CD14-positive monocyte (primary cell): ENCODE measurements at regions of chr20 and their contacts with region 1.

Region 1: DNA sequence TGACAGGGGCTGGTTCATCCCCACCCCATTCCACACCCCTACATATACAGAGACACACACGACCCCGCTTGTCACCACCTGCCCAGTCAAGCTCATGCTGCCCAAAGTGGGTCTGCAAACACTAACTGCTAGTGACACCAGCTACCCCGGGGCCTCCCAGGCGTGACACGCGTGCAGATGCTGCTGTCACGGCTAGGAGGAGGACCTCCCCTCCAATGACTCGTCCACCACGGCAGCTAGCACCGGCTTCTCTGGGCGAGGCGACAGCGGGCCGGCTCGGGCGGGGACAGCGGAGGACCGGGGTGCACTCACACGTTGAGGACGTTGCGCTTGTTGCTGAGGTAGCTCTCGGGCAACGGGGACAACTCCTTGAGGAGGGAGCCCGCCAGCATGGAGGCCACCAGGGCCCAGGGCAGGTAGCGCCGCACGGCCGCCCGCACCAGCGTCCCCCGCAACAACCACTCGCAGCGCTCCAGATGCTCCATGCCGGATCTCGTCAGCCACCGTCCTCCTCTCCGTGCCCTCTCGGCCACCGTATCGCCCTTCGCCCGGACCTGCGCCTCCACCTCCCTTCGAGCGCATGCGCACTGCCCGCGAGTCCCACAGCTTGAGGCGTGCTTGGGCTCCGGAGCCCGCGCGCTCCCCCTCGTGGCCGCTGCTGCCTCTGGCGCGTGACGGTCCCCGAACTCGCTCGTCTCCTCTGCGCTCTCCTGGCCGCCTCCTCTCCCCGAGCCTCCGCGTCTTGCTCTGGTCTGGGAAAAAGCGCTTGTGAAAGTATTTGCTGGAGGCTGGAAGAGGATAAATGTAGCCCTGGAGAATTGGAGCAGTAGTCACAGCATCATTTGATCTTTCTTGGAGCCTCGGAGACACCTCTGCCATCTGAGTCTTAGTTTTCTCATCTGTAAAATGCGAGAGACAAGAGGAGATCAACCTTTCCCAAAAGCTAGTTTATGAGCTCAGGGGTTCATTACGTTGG is at the start of gene FITM2:
- DNase-seq: peak; percentile 93 to 97 (median 97)
- H3K4me3 ChIP-seq: peak within 1 kb of the TSS; percentile 61 to 89 (median 82)
- H3K4me3 Mint-ChIP-seq: peak within 1 kb of the TSS; percentile 83 to 91
- H3K27ac ChIP-seq: peak within 1 kb of the TSS in 1 of 2 donors; percentile 73
- H3K27ac Mint-ChIP-seq: peak within 1 kb of the TSS; percentile 41 to 85 (median 74)
- H3K4me1 ChIP-seq: peaks cover 16 to 23% of the 10 kb centered on the region in 2 donors
- H3K4me1 Mint-ChIP-seq: peaks cover 16% of the 10 kb centered on the region
- H3K27me3 ChIP-seq: peaks cover 0 to 7% of the 10 kb centered on the region in 2 donors
- H3K27me3 Mint-ChIP-seq: peaks cover 8 to 14% (median 9%) of the 10 kb centered on the region in 3 donors
- CTCF ChIP-seq: peak; percentile 90
- polyA plus RNA-seq, gene FITM2: 0.32 to 2.2 (median 0.69) TPM

Region 2: GRCh38 chr20:43463864-43464785 is 846.8 kb before region 1 on chr20:
- intact Hi-C with region 1: loop called in 1 of 2 experiments (anchors 10 kb)
- DNase-seq: no peak
- H3K4me3 ChIP-seq: no peak overlapping the region
- H3K4me3 Mint-ChIP-seq: no peak overlapping the region
- H3K27ac ChIP-seq: no peak overlapping the region
- H3K27ac Mint-ChIP-seq: peak overlapping the region in 1 of 7 donors; percentile 1
- H3K4me1 ChIP-seq: peaks cover 2 to 6% of the 10 kb centered on the region in 2 donors
- H3K4me1 Mint-ChIP-seq: peaks cover 11% of the 10 kb centered on the region
- H3K27me3 ChIP-seq: no peaks in the 10 kb centered on the region
- H3K27me3 Mint-ChIP-seq: peaks cover 0 to 3% (median under 1%) of the 10 kb centered on the region in 3 donors
- CTCF ChIP-seq: no peak

Region 3: DNA sequence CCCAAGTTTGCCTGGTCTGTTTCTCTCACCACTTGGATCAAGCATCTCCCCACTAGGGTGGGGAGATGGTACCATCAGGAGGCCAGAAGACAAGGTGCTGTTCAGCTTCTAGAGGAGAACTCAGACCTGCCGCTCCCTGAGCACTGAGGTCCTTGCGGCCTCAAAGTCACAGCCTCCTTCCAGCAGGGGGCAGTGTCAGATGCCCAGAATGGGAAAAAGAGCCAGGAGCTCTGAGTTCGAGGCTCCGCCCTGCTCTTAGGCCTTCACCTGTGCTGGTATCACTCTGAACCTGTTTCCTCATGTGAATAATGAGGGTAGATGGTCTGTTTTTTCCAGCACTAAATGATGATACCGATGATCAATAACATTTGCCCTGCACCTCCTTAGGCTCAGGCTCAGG is 327.6 kb before region 1 on chr20:
- intact Hi-C with region 1: no loop called
- DNase-seq: no peak
- H3K4me3 ChIP-seq: no peak overlapping the region
- H3K4me3 Mint-ChIP-seq: no peak overlapping the region
- H3K27ac ChIP-seq: no peak overlapping the region
- H3K27ac Mint-ChIP-seq: no peak overlapping the region
- H3K4me1 ChIP-seq: peaks cover 13 to 15% of the 10 kb centered on the region in 2 donors
- H3K4me1 Mint-ChIP-seq: peaks cover 19% of the 10 kb centered on the region
- H3K27me3 ChIP-seq: peaks cover 4 to 5% of the 10 kb centered on the region in 2 donors
- H3K27me3 Mint-ChIP-seq: peaks cover 15 to 22% (median 22%) of the 10 kb centered on the region in 3 donors
- CTCF ChIP-seq: peak; percentile 37

Region 4: GRCh38 chr20:44187051-44187762 is 123.7 kb before region 1 on chr20 and contains the start of gene JPH2:
- intact Hi-C with region 1: no loop called
- DNase-seq: no peak
- H3K4me3 ChIP-seq: no peak within 1 kb of the TSS
- H3K4me3 Mint-ChIP-seq: peak within 1 kb of the TSS in 1 of 2 donors; percentile 75
- H3K27ac ChIP-seq: no peak within 1 kb of the TSS
- H3K27ac Mint-ChIP-seq: no peak within 1 kb of the TSS
- H3K4me1 ChIP-seq: peaks cover 4 to 11% of the 10 kb centered on the region in 2 donors
- H3K4me1 Mint-ChIP-seq: peaks cover 20% of the 10 kb centered on the region
- H3K27me3 ChIP-seq: peaks cover 19 to 38% of the 10 kb centered on the region in 2 donors
- H3K27me3 Mint-ChIP-seq: peaks cover 34 to 50% (median 39%) of the 10 kb centered on the region in 3 donors
- CTCF ChIP-seq: no peak
- polyA plus RNA-seq, gene JPH2: not detected

Region 5: GRCh38 chr20:44217342-44218092 is 93.4 kb before region 1 on chr20:
- intact Hi-C with region 1: loop called in 1 of 2 experiments (anchors 2 kb)
- DNase-seq: peak; percentile 49 to 65 (median 61)
- H3K4me3 ChIP-seq: no peak overlapping the region
- H3K4me3 Mint-ChIP-seq: peak overlapping the region in 1 of 2 donors; percentile 31
- H3K27ac ChIP-seq: no peak overlapping the region
- H3K27ac Mint-ChIP-seq: no peak overlapping the region
- H3K4me1 ChIP-seq: peaks cover 4 to 9% of the 10 kb centered on the region in 2 donors
- H3K4me1 Mint-ChIP-seq: peaks cover 24% of the 10 kb centered on the region
- H3K27me3 ChIP-seq: no peaks in the 10 kb centered on the region
- H3K27me3 Mint-ChIP-seq: peaks cover 3 to 9% (median 5%) of the 10 kb centered on the region in 3 donors
- CTCF ChIP-seq: peak; percentile 94

Region 6: DNA sequence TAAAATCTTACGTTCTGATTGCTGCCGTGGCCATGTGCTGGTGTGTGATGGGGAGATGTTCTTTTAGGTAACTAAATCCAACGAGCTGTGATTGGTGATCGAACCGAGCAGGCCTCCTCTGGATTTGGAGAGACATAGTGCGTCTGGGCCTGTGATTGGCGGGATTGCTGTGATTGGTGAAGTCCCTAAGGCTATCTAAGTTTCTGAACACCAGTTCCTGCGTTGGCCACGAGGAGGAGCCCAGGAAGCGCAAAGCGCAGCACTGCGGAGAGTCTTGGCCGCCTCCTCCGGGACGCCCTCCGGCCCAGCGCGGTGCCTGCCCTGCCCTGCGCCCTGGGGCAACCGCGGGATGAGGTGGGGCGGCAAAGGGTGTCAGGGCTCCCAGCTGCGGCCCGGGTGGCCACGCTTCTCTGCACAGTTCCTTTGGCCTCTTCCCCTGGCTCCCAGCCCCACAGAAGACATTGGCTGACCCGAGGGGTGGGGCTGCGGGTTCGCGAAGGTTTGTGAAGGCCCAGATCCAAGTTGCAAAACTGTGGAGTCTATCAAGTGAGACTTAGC is 77.6 kb after region 1 on chr20:
- intact Hi-C with region 1: no loop called
- DNase-seq: peak; percentile 32 to 61 (median 45)
- H3K4me3 ChIP-seq: no peak overlapping the region
- H3K4me3 Mint-ChIP-seq: peak overlapping the region in 1 of 2 donors; percentile 70
- H3K27ac ChIP-seq: no peak overlapping the region
- H3K27ac Mint-ChIP-seq: no peak overlapping the region
- H3K4me1 ChIP-seq: peaks cover 0 to 6% of the 10 kb centered on the region in 2 donors
- H3K4me1 Mint-ChIP-seq: peaks cover 6% of the 10 kb centered on the region
- H3K27me3 ChIP-seq: peaks cover 0 to 7% of the 10 kb centered on the region in 2 donors
- H3K27me3 Mint-ChIP-seq: peaks cover 12 to 17% (median 17%) of the 10 kb centered on the region in 3 donors
- CTCF ChIP-seq: peak; percentile 86